ENCODE measurements at regions of chr12 and their contacts with region 1.

Region 1: GRCh38 chr12:1634590-1635191 is 5.7 kb downstream of the WNT5B start:
- DNase-seq: peak in 4 of 5 donors; percentile 36 to 46 (median 40)
- H3K4me3 ChIP-seq: no peak overlapping the region
- H3K4me3 Mint-ChIP-seq: no peak overlapping the region
- H3K27ac ChIP-seq: no peak overlapping the region
- H3K27ac Mint-ChIP-seq: no peak overlapping the region
- H3K4me1 ChIP-seq: peaks cover 12% of the 10 kb centered on the region
- H3K4me1 Mint-ChIP-seq: peaks cover 5 to 15% (median 12%) of the 10 kb centered on the region in 4 donors
- H3K27me3 ChIP-seq: peaks cover 17% of the 10 kb centered on the region
- H3K27me3 Mint-ChIP-seq: peaks cover 27 to 39% of the 10 kb centered on the region in 2 donors

Region 2: GRCh38 chr12:1644534-1645438 is 10.1 kb after region 1 on chr12:
- CTCF ChIA-PET with region 1: interaction called, 27 read pairs
- POLR2A ChIA-PET with region 1: no interaction called
- intact Hi-C with region 1: no loop called
- DNase-seq: no peak
- H3K4me3 ChIP-seq: no peak overlapping the region
- H3K4me3 Mint-ChIP-seq: no peak overlapping the region
- H3K27ac ChIP-seq: no peak overlapping the region
- H3K27ac Mint-ChIP-seq: no peak overlapping the region
- H3K4me1 ChIP-seq: no peaks in the 10 kb centered on the region
- H3K4me1 Mint-ChIP-seq: no peaks in the 10 kb centered on the region
- H3K27me3 ChIP-seq: no peaks in the 10 kb centered on the region
- H3K27me3 Mint-ChIP-seq: peaks cover 14 to 16% of the 10 kb centered on the region in 2 donors

Region 3: GRCh38 chr12:1738446-1738845 is 103.8 kb after region 1 on chr12:
- CTCF ChIA-PET with region 1: no interaction called
- POLR2A ChIA-PET with region 1: no interaction called
- intact Hi-C with region 1: no loop called
- DNase-seq: no peak
- H3K4me3 ChIP-seq: no peak overlapping the region
- H3K4me3 Mint-ChIP-seq: no peak overlapping the region
- H3K27ac ChIP-seq: no peak overlapping the region
- H3K27ac Mint-ChIP-seq: no peak overlapping the region
- H3K4me1 ChIP-seq: peaks cover 29% of the 10 kb centered on the region
- H3K4me1 Mint-ChIP-seq: peaks cover 23 to 52% (median 36%) of the 10 kb centered on the region in 4 donors
- H3K27me3 ChIP-seq: no peaks in the 10 kb centered on the region
- H3K27me3 Mint-ChIP-seq: no peaks in the 10 kb centered on the region